ENCODE measurements at regions of chr1 and their contacts with region 1.

Region 1: GRCh38 chr1:247043406-247043805 is 35.2 kb downstream of the ZNF670 start:
- DNase-seq: no peak
- ATAC-seq: no peak

Region 2: GRCh38 chr1:247228133-247228532 is 184.7 kb after region 1 on chr1:
- intact Hi-C with region 1: no loop called
- DNase-seq: no peak
- ATAC-seq: no peak

Region 3: DNA sequence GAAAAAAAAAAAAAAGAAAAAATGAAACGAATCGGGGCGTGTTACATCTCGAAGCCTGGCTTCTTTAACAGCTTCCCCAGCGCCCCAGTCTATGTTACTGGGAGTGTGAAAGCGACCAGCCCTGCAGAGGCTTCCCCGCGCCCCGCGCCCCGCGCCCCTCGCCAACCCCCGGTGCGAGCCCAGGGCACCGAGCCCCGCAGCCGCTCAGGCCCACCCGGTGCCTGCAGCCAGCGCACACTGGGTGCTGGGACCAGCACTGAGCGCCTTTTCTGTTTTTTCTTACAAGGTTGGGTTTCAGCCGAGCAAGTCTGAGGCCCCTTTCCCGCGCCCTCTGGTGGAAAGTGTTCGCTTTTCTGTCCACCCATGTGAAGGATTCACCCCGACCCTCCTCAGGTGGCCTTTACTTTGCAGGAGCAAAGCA is 330.3 kb after region 1 on chr1:
- intact Hi-C with region 1: loop called in 1 of 2 experiments (anchors 10 kb)
- DNase-seq: peak; percentile 65
- ATAC-seq: peak; percentile 83 to 88